WTC11 (cell line): ENCODE measurements at regions of chr7 and their contacts with region 1.

Region 1: GRCh38 chr7:99975782-99976521 is at the start of gene AZGP1:
- DNase-seq: no peak
- ATAC-seq: no peak
- H3K4me3 Mint-ChIP-seq: no peak within 1 kb of the TSS
- H3K27ac Mint-ChIP-seq: no peak within 1 kb of the TSS
- H3K4me1 Mint-ChIP-seq: peaks cover 18% of the 10 kb centered on the region
- H3K27me3 Mint-ChIP-seq: no peaks in the 10 kb centered on the region; the same call in 1 of the 2 replicates
- CTCF ChIP-seq: no peak
- total RNA-seq, gene AZGP1: 1.6 to 2.7 TPM (median 1.8 TPM) in 3 replicates

Region 2: GRCh38 chr7:99733448-99733847 is 242.5 kb before region 1 on chr7:
- CTCF ChIA-PET with region 1: no interaction called
- POLR2A ChIA-PET with region 1: no interaction called
- DNase-seq: peak; percentile 23
- ATAC-seq: peak; percentile 63
- H3K4me3 Mint-ChIP-seq: no peak overlapping the region
- H3K27ac Mint-ChIP-seq: no peak overlapping the region
- H3K4me1 Mint-ChIP-seq: peaks cover 11% of the 10 kb centered on the region
- H3K27me3 Mint-ChIP-seq: peaks cover 3% of the 10 kb centered on the region; the same call in 1 of the 2 replicates
- CTCF ChIP-seq: peak; percentile 28; the same call in 1 of the 2 replicates

Region 3: DNA sequence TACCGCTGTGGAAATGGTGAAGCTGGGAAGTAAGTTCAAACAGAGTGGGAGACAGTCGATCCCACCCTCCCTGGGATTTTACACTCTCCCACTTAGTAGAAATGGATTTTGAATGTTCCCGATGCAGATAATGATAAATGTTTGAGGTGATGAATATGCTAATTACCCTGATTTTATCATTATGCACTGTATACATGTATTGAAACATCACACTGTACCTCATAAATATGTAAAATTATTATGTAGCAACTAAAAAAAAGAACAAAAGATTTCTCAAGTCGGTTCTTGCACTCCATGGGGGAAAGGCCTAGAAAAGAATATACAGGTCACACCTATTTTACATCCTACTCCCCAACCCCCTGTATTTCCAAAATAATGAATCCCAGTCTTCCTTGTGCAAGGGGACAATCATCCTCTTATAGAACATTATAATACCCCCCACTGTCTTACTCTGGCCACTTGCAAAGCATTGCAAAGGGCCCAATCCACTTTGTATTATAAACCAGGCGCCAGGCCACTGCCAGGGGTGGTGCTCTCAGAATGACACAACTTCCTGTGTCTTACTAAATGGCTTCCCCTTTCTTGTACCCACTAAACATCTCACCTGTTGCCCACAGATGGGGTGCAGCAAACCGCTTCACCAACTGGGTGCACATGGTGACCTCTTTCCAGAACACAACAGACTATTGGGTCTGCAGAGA is 78.5 kb before region 1 on chr7:
- CTCF ChIA-PET with region 1: no interaction called
- POLR2A ChIA-PET with region 1: no interaction called
- DNase-seq: no peak
- ATAC-seq: no peak
- H3K4me3 Mint-ChIP-seq: no peak overlapping the region
- H3K27ac Mint-ChIP-seq: no peak overlapping the region
- H3K4me1 Mint-ChIP-seq: no peaks in the 10 kb centered on the region
- H3K27me3 Mint-ChIP-seq: no peaks in the 10 kb centered on the region; the same call in 1 of the 2 replicates
- CTCF ChIP-seq: no peak

Region 4: DNA sequence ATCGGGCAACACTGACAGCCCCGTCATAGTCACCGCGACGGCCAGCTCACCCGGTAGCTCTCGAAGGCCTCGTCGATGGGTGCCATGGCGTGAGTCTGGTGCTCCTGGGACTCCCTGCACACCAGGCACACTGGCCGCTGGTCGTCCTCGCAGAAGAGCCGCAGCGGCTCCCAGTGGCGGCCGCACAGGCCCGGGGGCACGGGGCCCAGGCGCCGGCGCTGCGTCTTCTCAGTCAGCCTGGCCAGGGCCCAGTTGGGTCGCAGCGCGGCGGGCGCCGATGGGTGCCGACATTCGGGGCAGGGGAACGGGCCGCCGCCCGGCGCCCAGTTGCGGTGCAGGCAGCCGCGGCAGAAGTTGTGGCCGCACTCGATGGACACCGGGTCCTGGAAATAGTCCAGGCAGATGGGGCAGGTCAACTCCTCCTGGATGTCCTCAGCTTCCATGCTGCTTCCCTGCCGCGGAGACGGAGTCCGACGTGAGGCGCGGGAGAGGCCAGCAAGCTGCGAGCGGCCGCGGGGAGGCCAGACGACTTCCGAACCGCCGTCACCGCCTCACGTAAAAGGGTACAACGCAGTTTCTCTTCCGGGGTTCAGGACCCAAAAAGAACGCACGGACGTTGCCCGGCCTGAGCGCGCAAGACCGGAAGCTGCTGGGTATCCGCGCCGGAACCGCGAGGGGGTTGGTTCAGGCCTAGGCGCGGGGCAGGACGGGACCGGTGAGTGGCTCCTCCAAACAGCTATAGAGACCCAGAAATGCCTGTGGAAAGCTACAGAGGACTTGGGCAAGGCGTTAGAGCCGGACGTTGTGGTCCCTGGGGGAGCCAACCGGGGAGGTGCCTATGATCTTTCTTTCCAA is 56.8 kb before region 1 on chr7 and contains the start of gene TRIM4:
- CTCF ChIA-PET with region 1: interaction called, 16 read pairs
- POLR2A ChIA-PET with region 1: interaction called, 3 read pairs
- DNase-seq: peak; percentile 62
- ATAC-seq: peak; percentile 94
- H3K4me3 Mint-ChIP-seq: peak within 1 kb of the TSS; percentile 72
- H3K27ac Mint-ChIP-seq: peak within 1 kb of the TSS; percentile 89
- H3K4me1 Mint-ChIP-seq: peaks cover 7% of the 10 kb centered on the region
- H3K27me3 Mint-ChIP-seq: peaks cover 3% of the 10 kb centered on the region
- CTCF ChIP-seq: no peak
- total RNA-seq, gene TRIM4: 6.6 to 9.8 TPM (median 9.3 TPM) in 3 replicates

Region 5: DNA sequence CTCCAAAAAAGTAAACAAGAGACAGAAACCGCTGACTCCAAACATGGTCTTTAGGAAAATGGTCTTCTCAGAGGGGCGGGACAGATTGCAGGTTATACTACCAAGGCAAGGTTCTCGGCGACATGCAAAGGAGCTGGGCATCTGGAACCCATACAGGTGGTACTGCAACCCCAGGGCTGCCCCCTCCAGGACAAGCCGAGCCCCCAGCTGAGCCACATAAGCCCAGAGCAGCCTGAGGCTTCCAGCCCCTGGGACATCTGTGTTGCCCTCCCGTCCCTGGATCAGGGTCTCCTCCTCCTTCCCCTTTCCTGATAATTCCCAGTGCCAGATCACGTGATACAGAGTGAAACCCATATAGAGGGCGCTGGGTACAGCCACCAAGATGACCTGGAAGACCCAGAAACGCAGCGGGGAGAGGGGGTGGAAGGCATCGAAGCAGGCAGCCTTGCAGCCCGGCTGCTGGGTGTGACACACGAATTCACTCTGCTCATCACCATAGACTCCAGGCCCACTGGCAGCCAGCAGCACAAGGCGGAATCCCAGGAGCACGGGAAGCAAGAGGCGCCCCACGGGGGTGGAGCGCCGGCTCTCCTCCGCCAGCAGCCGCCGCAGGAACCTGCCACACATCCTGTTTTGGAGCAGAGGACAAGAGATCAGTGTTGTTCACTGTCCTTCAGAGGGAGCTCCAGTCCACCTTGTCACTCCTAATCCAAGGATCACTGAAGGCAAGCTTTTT is 46.8 kb before region 1 on chr7 and contains the start of gene GJC3:
- CTCF ChIA-PET with region 1: interaction called, 16 read pairs
- POLR2A ChIA-PET with region 1: no interaction called
- DNase-seq: peak; percentile 73
- ATAC-seq: peak; percentile 95
- H3K4me3 Mint-ChIP-seq: peak within 1 kb of the TSS; percentile 64
- H3K27ac Mint-ChIP-seq: no peak within 1 kb of the TSS; the same call in 1 of the 2 replicates
- H3K4me1 Mint-ChIP-seq: peaks cover 51% of the 10 kb centered on the region
- H3K27me3 Mint-ChIP-seq: peaks cover 14% of the 10 kb centered on the region
- CTCF ChIP-seq: no peak
- total RNA-seq, gene GJC3: 2.9 to 3.7 TPM (median 3.4 TPM) in 3 replicates